CD8-positive, alpha-beta memory T cell (primary cell): ENCODE measurements at regions of chr14 and their contacts with region 1.

Region 1: GRCh38 chr14:93970549-93970946 is 5.8 kb downstream of the ASB2 start:
- DNase-seq: peak; percentile 51 to 82 (median 60)
- H3K4me3 ChIP-seq: peak overlapping the region; percentile 75
- H3K4me3 Mint-ChIP-seq: peak overlapping the region; percentile 79 to 91 (median 90)
- H3K27ac ChIP-seq: no peak overlapping the region
- H3K27ac Mint-ChIP-seq: peak overlapping the region; percentile 65 to 96 (median 90)
- H3K4me1 ChIP-seq: peaks cover 15% of the 10 kb centered on the region
- H3K4me1 Mint-ChIP-seq: peaks cover 38 to 92% (median 57%) of the 10 kb centered on the region in 3 donors
- H3K27me3 ChIP-seq: no peaks in the 10 kb centered on the region
- H3K27me3 Mint-ChIP-seq: peaks cover 0 to 2% of the 10 kb centered on the region in 2 donors

Region 2: DNA sequence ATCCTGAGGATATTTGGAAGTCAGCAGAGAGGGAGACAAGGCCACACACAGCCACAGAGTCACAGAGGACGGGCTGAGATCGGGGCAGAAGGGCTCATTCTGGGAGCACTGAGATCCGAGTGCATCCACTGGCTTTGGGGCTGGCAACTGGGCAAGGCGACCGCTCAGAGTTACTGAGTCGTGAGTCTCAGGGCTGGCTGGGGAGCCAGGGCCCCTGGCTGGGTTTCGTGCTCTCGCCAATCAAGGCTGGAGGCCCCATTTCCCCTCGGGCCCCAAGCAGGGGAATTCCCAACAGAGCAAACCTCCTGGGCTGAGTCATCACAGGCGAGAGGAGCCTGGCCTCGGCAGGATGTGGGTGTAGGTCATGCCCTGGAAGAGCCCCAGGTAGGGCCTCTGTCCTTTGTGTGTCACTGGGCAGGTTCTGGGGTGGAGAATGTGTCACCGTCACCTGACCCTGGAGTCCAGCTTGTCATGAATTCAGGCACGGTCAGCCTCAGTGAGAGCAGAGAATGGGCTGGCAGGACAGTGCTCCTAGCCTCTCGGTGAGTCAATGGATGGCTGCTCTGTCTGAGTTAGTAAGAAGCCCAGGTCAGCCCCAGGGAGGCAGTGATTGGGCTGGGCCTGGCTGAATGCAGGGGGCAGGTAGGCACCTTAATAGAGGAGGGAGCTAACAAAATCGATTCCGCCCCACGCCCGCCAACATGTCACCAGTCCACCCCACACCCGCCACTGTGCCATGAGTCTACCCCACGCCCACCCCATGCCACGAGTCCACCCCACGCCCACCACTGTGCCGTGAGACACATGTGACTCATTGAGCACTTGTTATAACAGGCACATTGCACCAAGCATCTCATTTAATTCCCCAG is 11.1 kb before region 1 on chr14:
- CTCF ChIA-PET with region 1: interaction called, 177 read pairs
- POLR2A ChIA-PET with region 1: interaction called, 21 read pairs
- DNase-seq: peak; percentile 73 to 97 (median 90)
- H3K4me3 ChIP-seq: peak overlapping the region; percentile 3
- H3K4me3 Mint-ChIP-seq: peak overlapping the region; percentile 65 to 88 (median 80)
- H3K27ac ChIP-seq: peak overlapping the region; percentile 55
- H3K27ac Mint-ChIP-seq: peak overlapping the region; percentile 98 to 100 (median 99)
- H3K4me1 ChIP-seq: peaks cover 97% of the 10 kb centered on the region
- H3K4me1 Mint-ChIP-seq: peaks cover 94 to 99% (median 99%) of the 10 kb centered on the region in 3 donors
- H3K27me3 ChIP-seq: no peaks in the 10 kb centered on the region
- H3K27me3 Mint-ChIP-seq: no peaks in the 10 kb centered on the region

Region 3: DNA sequence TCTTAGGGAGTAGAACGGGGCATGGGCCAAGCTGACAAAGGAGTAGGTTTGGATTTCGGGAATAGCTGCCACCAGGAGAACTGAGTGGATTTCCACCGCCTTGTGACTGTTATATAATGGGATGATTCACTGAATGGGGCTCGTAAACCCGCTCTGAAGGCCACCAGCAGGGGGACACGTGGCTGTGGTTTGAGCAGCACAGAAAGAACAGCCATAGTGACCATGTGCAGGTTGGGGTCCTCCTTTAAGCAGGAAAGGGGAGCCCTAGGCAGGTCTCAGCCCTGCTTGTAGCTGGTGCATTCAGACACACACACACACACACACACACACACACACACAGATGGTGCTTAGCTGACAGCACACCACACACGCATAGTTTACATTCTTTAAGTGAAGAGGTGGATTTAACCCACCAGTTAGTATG is 14.5 kb after region 1 on chr14:
- CTCF ChIA-PET with region 1: interaction called, 10 read pairs
- POLR2A ChIA-PET with region 1: no interaction called
- DNase-seq: no peak
- H3K4me3 ChIP-seq: no peak overlapping the region
- H3K4me3 Mint-ChIP-seq: no peak overlapping the region
- H3K27ac ChIP-seq: no peak overlapping the region
- H3K27ac Mint-ChIP-seq: no peak overlapping the region
- H3K4me1 ChIP-seq: no peaks in the 10 kb centered on the region
- H3K4me1 Mint-ChIP-seq: peaks cover 3 to 7% (median 6%) of the 10 kb centered on the region in 3 donors
- H3K27me3 ChIP-seq: no peaks in the 10 kb centered on the region
- H3K27me3 Mint-ChIP-seq: peaks cover 0 to 4% of the 10 kb centered on the region in 2 donors

Region 4: DNA sequence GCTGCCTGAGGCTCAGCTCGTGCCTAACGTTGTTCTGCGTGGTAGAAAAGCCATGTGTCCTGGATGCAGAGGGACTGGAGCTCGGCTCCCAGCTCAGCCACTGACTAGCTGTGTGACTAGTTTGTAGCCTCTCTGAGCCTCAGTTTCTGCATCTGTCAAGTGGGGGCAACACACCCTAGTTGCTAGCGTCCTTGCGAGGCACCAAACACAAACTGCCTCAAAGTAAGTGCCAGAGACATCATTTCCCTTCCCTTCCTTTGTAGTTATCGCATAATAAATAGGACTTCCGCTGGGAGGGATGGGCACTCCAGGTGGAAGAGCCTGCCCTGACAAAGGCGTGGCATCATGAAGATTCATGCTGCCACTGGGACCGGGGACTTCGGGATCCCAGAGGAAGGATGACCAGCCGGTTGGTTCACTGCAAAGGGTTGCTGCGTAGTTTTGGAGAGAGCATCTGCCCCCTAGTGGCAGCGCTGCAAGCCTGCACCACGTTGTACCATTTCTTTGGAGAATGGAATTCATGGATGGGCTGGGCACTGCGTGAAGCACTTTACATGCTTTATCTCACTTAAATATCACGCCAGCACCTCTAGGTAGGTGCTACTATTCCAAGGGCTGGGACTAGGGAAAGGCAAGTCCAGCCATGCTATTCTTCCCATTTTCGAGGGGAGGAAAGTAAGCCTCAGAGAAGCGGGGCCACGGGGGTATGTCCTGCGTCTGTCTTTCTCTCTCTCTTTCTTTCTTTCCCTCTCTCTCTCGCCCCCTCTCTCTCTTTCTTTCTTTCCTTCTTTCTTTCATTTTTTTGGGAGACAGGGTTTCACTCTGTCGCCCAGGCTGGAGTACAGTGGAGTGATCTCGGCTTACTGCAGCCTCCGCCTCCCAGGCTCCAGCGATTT is 31.2 kb after region 1 on chr14:
- CTCF ChIA-PET with region 1: interaction called, 75 read pairs
- POLR2A ChIA-PET with region 1: interaction called, 3 read pairs
- DNase-seq: peak; percentile 40 to 69 (median 50)
- H3K4me3 ChIP-seq: peak overlapping the region; percentile 27
- H3K4me3 Mint-ChIP-seq: peak overlapping the region in 2 of 7 donors; percentile 10 to 28
- H3K27ac ChIP-seq: no peak overlapping the region
- H3K27ac Mint-ChIP-seq: no peak overlapping the region
- H3K4me1 ChIP-seq: peaks cover 7% of the 10 kb centered on the region
- H3K4me1 Mint-ChIP-seq: peaks cover 6 to 10% (median 7%) of the 10 kb centered on the region in 3 donors
- H3K27me3 ChIP-seq: no peaks in the 10 kb centered on the region
- H3K27me3 Mint-ChIP-seq: peaks cover 4 to 13% of the 10 kb centered on the region in 2 donors